Sigmoid colon (tissue), 7 donors: ENCODE measurements at regions of chr19 and their contacts with region 1.

Region 1: GRCh38 chr19:45643024-45643926 is 4.1 kb upstream of the EML2 start:
- DNase-seq: peak; percentile 86
- H3K4me3 ChIP-seq: no peak overlapping the region
- H3K27ac ChIP-seq: no peak overlapping the region
- H3K4me1 ChIP-seq: peaks cover 0 to 56% (median 36%) of the 10 kb centered on the region in 4 donors
- H3K27me3 ChIP-seq: peaks cover 15 to 41% (median 29%) of the 10 kb centered on the region in 3 donors
- CTCF ChIP-seq: peak; percentile 89 to 99 (median 98)
- EP300 ChIP-seq: no peak
- POLR2A ChIP-seq: no peak

Region 2: DNA sequence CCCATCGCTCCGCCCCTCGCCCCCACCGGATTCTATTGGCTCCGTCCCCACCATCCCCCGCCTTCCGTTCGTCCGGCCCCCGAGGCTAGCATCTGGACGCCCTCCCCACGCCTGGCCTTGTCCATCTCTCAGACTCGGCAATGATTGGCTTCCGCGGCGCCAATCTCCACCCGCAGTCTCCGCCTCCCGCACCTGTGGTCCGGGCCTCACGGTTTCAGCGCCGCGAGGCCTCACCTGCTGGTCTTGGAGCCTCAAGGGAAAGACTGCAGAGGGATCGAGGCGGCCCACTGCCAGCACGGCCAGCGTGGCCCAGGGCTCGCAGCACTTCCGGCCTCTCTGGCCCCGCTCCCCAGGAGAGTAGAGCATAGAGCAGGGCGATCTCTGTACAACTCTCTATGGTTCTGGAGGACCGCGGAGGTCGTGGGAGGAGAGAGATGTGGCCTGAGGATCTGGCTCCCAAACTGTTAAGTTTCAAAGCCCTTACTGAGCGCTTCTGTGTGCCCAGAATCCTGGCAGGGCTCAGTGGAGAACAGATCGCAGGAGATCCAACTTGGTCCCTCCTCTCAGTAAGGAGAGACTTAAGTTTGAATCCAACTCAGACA is 219.6 kb before region 1 on chr19 and contains the start of gene ERCC1:
- intact Hi-C with region 1: loop called (anchors 5 kb)
- DNase-seq: peak; percentile 98
- H3K4me3 ChIP-seq: peak within 1 kb of the TSS; percentile 55 to 73 (median 61)
- H3K27ac ChIP-seq: peak within 1 kb of the TSS; percentile 80 to 92 (median 90)
- H3K4me1 ChIP-seq: peaks cover 0 to 41% (median 23%) of the 10 kb centered on the region in 4 donors
- H3K27me3 ChIP-seq: no peaks in the 10 kb centered on the region
- CTCF ChIP-seq: no peak
- EP300 ChIP-seq: no peak
- POLR2A ChIP-seq: peak; percentile 28 to 73
- total RNA-seq, gene ERCC1: 41.8 to 67.0 (median 64.4) TPM

Region 3: DNA sequence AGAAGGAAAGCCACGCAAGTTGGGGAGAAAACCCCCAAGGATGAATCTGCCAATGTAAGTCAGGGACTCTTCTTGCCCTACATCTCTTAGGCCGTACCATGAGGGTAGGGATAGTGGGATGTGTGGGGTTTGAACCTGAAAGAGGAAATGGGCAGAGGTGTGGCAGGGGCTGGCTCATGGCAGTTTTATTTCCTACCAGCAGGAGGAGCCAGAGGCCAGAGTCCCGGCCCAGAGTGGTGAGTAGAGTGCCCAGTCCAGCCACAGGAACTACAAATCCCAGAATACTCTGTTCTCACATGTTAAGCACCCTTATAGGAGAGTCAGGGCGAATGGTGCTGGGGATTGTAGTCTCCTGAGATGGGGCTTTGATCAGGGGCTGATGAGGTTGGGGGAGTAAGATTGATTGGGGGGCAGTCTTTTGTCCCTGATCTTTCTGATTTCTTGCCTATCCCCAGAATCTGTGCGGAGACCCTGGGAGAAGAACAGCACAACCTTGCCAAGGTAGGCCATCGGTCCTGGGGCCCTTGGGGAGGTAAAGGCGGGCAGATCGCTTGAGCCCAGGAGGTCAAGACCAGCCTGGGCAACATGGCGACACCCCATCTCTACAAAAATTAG is 119.5 kb before region 1 on chr19:
- intact Hi-C with region 1: loop called (anchors 1 kb)
- DNase-seq: peak; percentile 92
- H3K4me3 ChIP-seq: no peak overlapping the region
- H3K27ac ChIP-seq: peak overlapping the region; percentile 30 to 54 (median 47)
- H3K4me1 ChIP-seq: peaks cover 0 to 13% (median 11%) of the 10 kb centered on the region in 4 donors
- H3K27me3 ChIP-seq: no peaks in the 10 kb centered on the region
- CTCF ChIP-seq: peak; percentile 83 to 96 (median 92)
- EP300 ChIP-seq: no peak
- POLR2A ChIP-seq: no peak

Region 4: GRCh38 chr19:45607071-45608029 is 35.9 kb before region 1 on chr19:
- intact Hi-C with region 1: loop called (anchors 1 kb)
- DNase-seq: peak; percentile 87
- H3K4me3 ChIP-seq: peak overlapping the region in 3 of 4 donors; percentile 20 to 32 (median 29)
- H3K27ac ChIP-seq: peak overlapping the region in 1 of 4 donors; percentile 41
- H3K4me1 ChIP-seq: peaks cover 0 to 10% (median 9%) of the 10 kb centered on the region in 4 donors
- H3K27me3 ChIP-seq: peaks cover 3 to 25% (median 14%) of the 10 kb centered on the region in 3 donors
- CTCF ChIP-seq: peak; percentile 72 to 90 (median 88)
- EP300 ChIP-seq: no peak
- POLR2A ChIP-seq: no peak